ENCODE measurements at regions of chr14 and their contacts with region 1.

Region 1: DNA sequence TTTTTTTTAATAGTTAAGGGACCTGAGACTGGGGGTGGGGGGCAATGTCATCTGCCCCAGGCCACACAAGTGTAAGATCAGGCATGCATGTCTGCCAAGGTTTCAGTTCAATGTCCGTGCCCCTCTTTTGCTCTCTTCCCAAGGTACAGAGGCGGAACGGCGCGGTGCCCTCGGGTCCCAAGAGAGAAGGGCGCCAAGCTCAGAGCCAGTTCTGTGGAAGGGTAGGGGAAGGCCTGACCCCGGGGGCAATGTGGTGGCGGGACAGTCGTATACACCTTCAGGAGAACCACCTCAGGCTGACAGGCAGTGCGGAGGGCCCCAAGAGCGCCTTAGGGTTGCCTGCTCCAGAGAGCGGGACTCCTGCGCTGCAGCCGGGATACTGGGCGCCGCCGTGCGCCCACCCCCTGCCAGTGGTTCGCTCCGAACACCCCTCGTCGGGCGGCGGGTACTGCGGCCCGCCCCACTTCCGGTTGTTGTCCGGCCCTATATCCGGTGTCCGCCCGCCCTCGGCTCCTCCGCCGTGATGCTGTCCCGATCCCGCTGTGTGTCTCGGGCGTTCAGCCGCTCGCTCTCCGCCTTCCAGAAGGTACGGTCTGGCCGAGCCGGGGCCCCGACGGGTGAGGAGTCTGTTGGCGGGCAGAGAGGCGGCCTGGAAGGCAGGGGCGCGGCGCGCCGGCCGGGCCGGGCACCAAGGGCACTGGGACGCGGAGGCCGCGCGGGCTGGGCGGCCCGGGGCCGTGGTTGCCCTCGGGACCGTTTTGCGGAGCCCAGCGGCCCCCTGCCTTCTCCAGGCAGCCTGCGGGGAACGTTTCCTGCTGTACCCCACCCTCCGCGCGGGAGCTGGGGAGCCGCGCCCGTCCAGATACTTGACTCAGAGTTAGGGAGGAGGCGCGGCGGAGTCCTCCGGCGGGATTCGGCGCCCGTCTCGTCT is at the start of gene DLST:
- DNase-seq: peak; percentile 70 to 92 (median 80)
- ATAC-seq: peak; percentile 63
- H3K4me3 ChIP-seq: peak within 1 kb of the TSS; percentile 95
- H3K4me3 Mint-ChIP-seq: peak within 1 kb of the TSS; percentile 99
- H3K27ac ChIP-seq: peak within 1 kb of the TSS; percentile 82 to 88
- H3K27ac Mint-ChIP-seq: peak within 1 kb of the TSS; percentile 92
- H3K4me1 ChIP-seq: peaks cover 53% of the 10 kb centered on the region
- H3K4me1 Mint-ChIP-seq: peaks cover 70% of the 10 kb centered on the region
- H3K27me3 ChIP-seq: no peaks in the 10 kb centered on the region
- H3K27me3 Mint-ChIP-seq: no peaks in the 10 kb centered on the region
- CTCF ChIP-seq: no peak
- total RNA-seq, gene DLST: 162 to 170 TPM

Region 2: DNA sequence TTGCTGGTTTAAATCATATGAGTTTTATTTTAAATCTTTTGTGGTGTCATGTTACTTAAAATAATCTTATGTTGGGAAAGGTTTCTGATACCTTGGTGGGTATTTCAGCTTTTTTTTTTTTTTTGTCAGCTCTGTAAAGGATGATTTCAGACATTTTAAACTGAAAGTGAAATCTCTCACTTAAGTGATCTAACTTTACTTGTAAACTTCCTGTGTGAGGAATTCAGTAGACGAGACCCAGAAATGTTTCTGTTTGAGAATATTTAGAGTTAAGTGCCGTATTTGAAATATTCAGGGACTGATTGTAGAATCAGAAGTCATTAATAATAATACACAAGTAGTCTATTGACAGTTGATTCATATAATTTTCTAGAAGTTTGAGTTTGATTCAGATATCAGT is 43.5 kb before region 1 on chr14:
- CTCF ChIA-PET with region 1: no interaction called
- POLR2A ChIA-PET with region 1: interaction called, 12 read pairs
- intact Hi-C with region 1: no loop called
- DNase-seq: peak in 3 of 14 experiments; percentile 57 to 79 (median 59)
- ATAC-seq: peak; percentile 76
- H3K4me3 ChIP-seq: peak overlapping the region; percentile 8
- H3K4me3 Mint-ChIP-seq: peak overlapping the region; percentile 86
- H3K27ac ChIP-seq: peak overlapping the region; percentile 67 to 88
- H3K27ac Mint-ChIP-seq: peak overlapping the region; percentile 97
- H3K4me1 ChIP-seq: peaks cover 30% of the 10 kb centered on the region
- H3K4me1 Mint-ChIP-seq: peaks cover 87% of the 10 kb centered on the region
- H3K27me3 ChIP-seq: no peaks in the 10 kb centered on the region
- H3K27me3 Mint-ChIP-seq: no peaks in the 10 kb centered on the region
- CTCF ChIP-seq: no peak

Region 3: GRCh38 chr14:74867673-74868072 is 14.0 kb before region 1 on chr14:
- CTCF ChIA-PET with region 1: interaction called, 3 read pairs
- POLR2A ChIA-PET with region 1: interaction called, 36 read pairs
- intact Hi-C with region 1: loop called (anchors 2 kb)
- DNase-seq: peak in 13 of 14 experiments; percentile 9 to 72 (median 36)
- ATAC-seq: peak; percentile 84
- H3K4me3 ChIP-seq: no peak overlapping the region
- H3K4me3 Mint-ChIP-seq: peak overlapping the region; percentile 8
- H3K27ac ChIP-seq: no peak overlapping the region
- H3K27ac Mint-ChIP-seq: peak overlapping the region; percentile 28
- H3K4me1 ChIP-seq: peaks cover 16% of the 10 kb centered on the region
- H3K4me1 Mint-ChIP-seq: peaks cover 25% of the 10 kb centered on the region
- H3K27me3 ChIP-seq: no peaks in the 10 kb centered on the region
- H3K27me3 Mint-ChIP-seq: no peaks in the 10 kb centered on the region
- CTCF ChIP-seq: no peak

Region 4: DNA sequence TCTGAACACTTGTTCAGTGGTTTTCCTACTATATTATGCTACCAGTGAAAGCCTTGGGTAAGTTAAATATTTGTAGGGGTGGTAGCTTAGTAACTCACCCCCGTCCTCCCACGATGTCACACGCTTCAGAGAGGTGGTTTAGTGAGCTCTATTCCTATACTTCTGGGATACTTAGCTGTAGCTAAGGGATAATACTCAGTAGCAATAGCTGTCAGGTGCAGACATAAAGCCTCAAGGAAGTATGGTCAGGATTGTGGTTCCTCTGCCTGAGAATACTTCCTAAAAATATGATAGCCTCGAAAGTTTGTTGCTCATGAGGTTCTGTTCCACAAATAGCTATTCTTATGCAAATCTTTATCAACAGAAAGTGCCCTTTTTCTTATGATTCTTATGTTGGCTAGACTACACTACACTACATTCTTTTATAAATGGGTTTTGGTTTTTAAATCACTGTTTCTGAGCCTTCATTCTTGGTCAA is 12.0 kb after region 1 on chr14:
- CTCF ChIA-PET with region 1: no interaction called
- POLR2A ChIA-PET with region 1: interaction called, 20 read pairs
- intact Hi-C with region 1: no loop called
- DNase-seq: no peak
- ATAC-seq: no peak
- H3K4me3 ChIP-seq: no peak overlapping the region
- H3K4me3 Mint-ChIP-seq: no peak overlapping the region
- H3K27ac ChIP-seq: no peak overlapping the region
- H3K27ac Mint-ChIP-seq: peak overlapping the region; percentile 3
- H3K4me1 ChIP-seq: peaks cover 1% of the 10 kb centered on the region
- H3K4me1 Mint-ChIP-seq: peaks cover 8% of the 10 kb centered on the region
- H3K27me3 ChIP-seq: no peaks in the 10 kb centered on the region
- H3K27me3 Mint-ChIP-seq: no peaks in the 10 kb centered on the region
- CTCF ChIP-seq: no peak

Region 5: GRCh38 chr14:74913986-74914573 is 32.4 kb after region 1 on chr14:
- CTCF ChIA-PET with region 1: no interaction called
- POLR2A ChIA-PET with region 1: no interaction called
- intact Hi-C with region 1: no loop called
- DNase-seq: peak in 3 of 14 experiments; percentile 19 to 29 (median 25)
- ATAC-seq: no peak
- H3K4me3 ChIP-seq: no peak overlapping the region
- H3K4me3 Mint-ChIP-seq: no peak overlapping the region
- H3K27ac ChIP-seq: no peak overlapping the region
- H3K27ac Mint-ChIP-seq: no peak overlapping the region
- H3K4me1 ChIP-seq: no peaks in the 10 kb centered on the region
- H3K4me1 Mint-ChIP-seq: no peaks in the 10 kb centered on the region
- H3K27me3 ChIP-seq: no peaks in the 10 kb centered on the region
- H3K27me3 Mint-ChIP-seq: no peaks in the 10 kb centered on the region
- CTCF ChIP-seq: peak; percentile 31